GM18951 (cell line): ENCODE measurements at regions of chr2 and their contacts with region 1.

Region 1: DNA sequence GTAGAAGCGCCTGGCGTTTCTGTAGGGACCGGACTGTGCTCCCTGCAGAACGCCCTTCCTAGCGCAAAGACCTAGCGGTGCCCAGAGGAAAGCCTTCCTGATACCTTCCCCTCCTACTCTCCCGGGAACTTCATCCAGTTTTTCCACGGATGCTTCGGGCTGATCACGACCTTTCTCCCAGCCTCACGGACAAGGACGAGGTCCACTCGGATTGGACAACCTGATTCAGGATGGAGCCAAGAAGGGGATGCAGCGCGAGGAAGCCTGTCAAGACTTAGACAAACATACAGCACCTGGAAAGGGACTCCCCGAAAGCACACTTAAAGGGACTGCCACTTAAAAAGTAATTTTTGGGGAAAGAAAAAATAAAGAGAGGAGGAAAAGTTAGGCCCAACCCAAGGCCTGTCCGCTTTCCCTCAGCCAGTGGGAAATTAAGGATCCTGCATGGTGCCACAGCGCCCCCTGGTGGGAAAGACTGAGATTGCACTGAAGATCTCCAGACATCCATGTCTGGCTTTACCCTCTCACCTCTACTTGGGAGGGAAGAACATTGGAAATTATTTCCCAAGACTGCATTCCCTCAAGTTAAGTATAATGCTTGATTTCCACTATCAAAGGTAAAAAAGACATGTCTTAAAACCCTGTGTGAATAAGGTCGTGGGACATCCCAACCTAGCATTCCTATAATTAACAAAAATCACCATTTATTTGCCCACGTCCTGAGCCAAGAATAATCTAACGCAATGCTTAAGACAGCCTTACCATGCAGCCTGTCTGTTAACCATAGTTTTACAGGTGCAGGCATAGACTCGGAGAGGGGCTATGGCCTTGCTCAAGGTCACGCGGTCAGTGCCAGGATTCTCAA is 13.4 kb upstream of the COPS8 start:
- POLR2A ChIP-seq: no peak

Region 2: GRCh38 chr2:236345081-236345714 is 727.1 kb before region 1 on chr2:
- in situ Hi-C with region 1: loop called (anchors 5 kb)
- POLR2A ChIP-seq: no peak

Region 3: GRCh38 chr2:237980751-237981150 is 908.5 kb after region 1 on chr2:
- in situ Hi-C with region 1: no loop called
- POLR2A ChIP-seq: no peak